Aorta (tissue), 5 donors: ENCODE measurements at regions of chr11 and their contacts with region 1.

Region 1: DNA sequence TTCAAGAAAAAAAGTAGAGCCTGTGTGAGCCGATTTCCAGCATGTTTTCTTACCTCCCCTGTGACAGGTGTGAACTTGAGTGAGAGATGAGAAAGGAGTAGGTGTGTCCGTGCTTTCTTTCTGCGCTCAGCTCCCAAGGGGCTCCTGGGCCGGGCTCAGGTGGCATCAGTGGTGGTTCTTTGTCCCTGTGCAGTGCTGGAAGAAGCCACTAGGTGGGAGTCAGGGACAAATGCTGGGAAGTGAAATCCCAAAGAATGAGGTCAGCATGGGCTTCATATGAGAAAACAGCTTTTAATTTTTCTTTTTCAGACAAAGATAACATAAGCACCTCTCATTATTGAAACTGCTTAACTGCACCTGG is 57.8 kb downstream of the PPFIBP2 start:
- DNase-seq: peak; percentile 64 to 82
- ATAC-seq: peak; percentile 82
- H3K4me3 ChIP-seq: no peak overlapping the region
- H3K27ac ChIP-seq: no peak overlapping the region
- H3K4me1 ChIP-seq: no peaks in the 10 kb centered on the region
- H3K27me3 ChIP-seq: no peaks in the 10 kb centered on the region

Region 2: GRCh38 chr11:7513234-7514098 is 58.2 kb before region 1 on chr11 and contains the start of gene PPFIBP2:
- intact Hi-C with region 1: loop called in 1 of 2 experiments (anchors 5 kb)
- DNase-seq: peak; percentile 91 to 95
- ATAC-seq: peak; percentile 96
- H3K4me3 ChIP-seq: peak within 1 kb of the TSS; percentile 38 to 87
- H3K27ac ChIP-seq: peak within 1 kb of the TSS; percentile 71 to 96
- H3K4me1 ChIP-seq: peaks cover 0 to 3% of the 10 kb centered on the region in 2 donors
- H3K27me3 ChIP-seq: no peaks in the 10 kb centered on the region
- total RNA-seq, gene PPFIBP2: 17.6 to 35.6 TPM

Region 3: GRCh38 chr11:7657306-7658025 is 85.8 kb after region 1 on chr11:
- intact Hi-C with region 1: loop called in 1 of 2 experiments (anchors 1 kb)
- DNase-seq: peak in 1 of 2 donors; percentile 67
- ATAC-seq: peak; percentile 88
- H3K4me3 ChIP-seq: no peak overlapping the region
- H3K27ac ChIP-seq: no peak overlapping the region
- H3K4me1 ChIP-seq: no peaks in the 10 kb centered on the region
- H3K27me3 ChIP-seq: no peaks in the 10 kb centered on the region

Region 4: DNA sequence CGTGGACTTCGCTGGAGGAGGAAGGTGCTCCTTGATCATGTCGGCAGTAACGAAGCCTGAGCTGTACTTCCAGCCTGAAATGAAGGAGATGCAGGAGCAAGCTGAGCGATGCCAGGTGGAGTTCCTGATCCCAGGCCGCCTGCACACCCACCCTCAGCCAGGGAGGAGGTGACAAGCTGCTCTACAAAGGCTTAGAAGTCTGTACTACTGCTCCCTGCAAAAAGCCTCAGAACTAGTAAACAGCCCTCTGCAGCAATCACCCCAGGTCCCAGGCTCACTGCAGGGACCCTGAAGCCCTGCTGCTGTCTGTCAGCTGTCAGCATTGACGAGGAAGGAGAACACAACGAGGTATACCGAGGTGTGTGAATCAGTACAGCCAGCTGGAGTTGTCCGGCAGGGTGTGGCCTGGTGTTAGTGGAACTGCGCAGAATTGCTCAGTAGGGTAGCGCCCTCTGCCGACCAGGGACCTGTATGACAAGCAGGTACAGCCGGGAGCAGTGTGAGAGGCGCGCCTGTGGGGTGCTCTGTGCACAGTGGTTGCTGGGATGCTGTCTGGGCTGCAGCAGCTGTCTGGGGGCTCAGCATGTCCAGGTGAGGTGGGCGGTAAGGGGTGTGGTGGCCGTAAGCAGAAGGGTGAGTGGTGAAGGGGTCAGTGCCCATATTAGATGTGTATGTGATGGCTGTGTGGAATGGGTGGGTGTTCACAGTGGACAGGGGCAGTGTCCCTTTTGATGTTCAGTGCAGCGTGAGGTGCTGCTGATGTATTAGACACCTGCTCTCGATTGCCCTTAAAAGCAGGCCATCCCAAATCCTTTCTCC is 94.1 kb after region 1 on chr11:
- intact Hi-C with region 1: loop called (anchors 1 to 2 kb)
- DNase-seq: peak; percentile 85 to 93
- ATAC-seq: peak; percentile 89
- H3K4me3 ChIP-seq: no peak overlapping the region
- H3K27ac ChIP-seq: no peak overlapping the region
- H3K4me1 ChIP-seq: no peaks in the 10 kb centered on the region
- H3K27me3 ChIP-seq: no peaks in the 10 kb centered on the region

Region 5: GRCh38 chr11:7688238-7688826 is 116.7 kb after region 1 on chr11:
- intact Hi-C with region 1: loop called in 1 of 2 experiments (anchors 5 kb)
- DNase-seq: no peak
- ATAC-seq: no peak
- H3K4me3 ChIP-seq: no peak overlapping the region
- H3K27ac ChIP-seq: no peak overlapping the region
- H3K4me1 ChIP-seq: peaks cover 0 to 3% of the 10 kb centered on the region in 2 donors
- H3K27me3 ChIP-seq: no peaks in the 10 kb centered on the region